Dendritic cell treated with granulocyte-macrophage colony-stimulating factor and Interleukin-4, amounts not matched to agents 40 ng/mL and 50 ng/mL, for 4 days (primary cell): ENCODE measurements at regions of chr2 and their contacts with region 1.

Region 1: GRCh38 chr2:216666461-216667233 is 28.7 kb downstream of the IGFBP5 start:
- H3K4me3 Mint-ChIP-seq: no peak overlapping the region
- H3K27ac Mint-ChIP-seq: no peak overlapping the region
- H3K4me1 Mint-ChIP-seq: no peaks in the 10 kb centered on the region
- H3K27me3 Mint-ChIP-seq: peaks cover 25% of the 10 kb centered on the region

Region 2: DNA sequence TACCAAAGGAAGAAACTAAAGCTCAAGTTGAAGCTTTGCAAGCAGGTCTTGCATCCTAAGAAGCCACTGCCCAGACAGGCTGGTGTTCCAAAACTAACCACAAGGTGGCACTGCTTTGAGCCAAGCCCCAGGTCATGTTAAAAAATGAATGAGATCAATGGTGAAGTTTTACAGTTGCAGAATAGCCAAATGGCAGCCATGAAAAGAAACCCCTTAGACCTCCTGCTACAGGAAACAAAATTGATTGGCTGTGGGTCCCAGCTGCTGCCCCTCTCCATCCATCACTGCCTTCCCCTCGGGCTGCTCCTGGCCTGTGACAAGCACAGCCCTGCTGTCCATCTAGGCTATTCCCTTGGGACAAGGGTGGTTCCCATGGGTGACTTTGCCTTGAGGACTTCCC is 632.6 kb before region 1 on chr2:
- intact Hi-C with region 1: loop called (anchors 2 kb)
- H3K4me3 Mint-ChIP-seq: no peak overlapping the region
- H3K27ac Mint-ChIP-seq: no peak overlapping the region
- H3K4me1 Mint-ChIP-seq: no peaks in the 10 kb centered on the region
- H3K27me3 Mint-ChIP-seq: no peaks in the 10 kb centered on the region

Region 3: GRCh38 chr2:216114714-216115557 is 551.7 kb before region 1 on chr2:
- intact Hi-C with region 1: loop called (anchors 5 kb)
- H3K4me3 Mint-ChIP-seq: peak overlapping the region; percentile 82
- H3K27ac Mint-ChIP-seq: peak overlapping the region; percentile 100
- H3K4me1 Mint-ChIP-seq: peaks cover 86% of the 10 kb centered on the region
- H3K27me3 Mint-ChIP-seq: no peaks in the 10 kb centered on the region

Region 4: GRCh38 chr2:216519154-216519762 is 147.4 kb before region 1 on chr2:
- intact Hi-C with region 1: loop called (anchors 1 kb)
- H3K4me3 Mint-ChIP-seq: no peak overlapping the region
- H3K27ac Mint-ChIP-seq: no peak overlapping the region
- H3K4me1 Mint-ChIP-seq: no peaks in the 10 kb centered on the region
- H3K27me3 Mint-ChIP-seq: peaks cover 1% of the 10 kb centered on the region